Right cardiac atrium (tissue), 5 donors: ENCODE measurements at regions of chr4 and their contacts with region 1.

Region 1: GRCh38 chr4:82428969-82429727 is 1.1 kb downstream of the HNRNPDL start:
- DNase-seq: peak; percentile 92 to 98 (median 97)
- ATAC-seq: peak; percentile 89 to 90
- H3K4me3 ChIP-seq: peak overlapping the region; percentile 64
- H3K27ac ChIP-seq: peak overlapping the region; percentile 95
- H3K4me1 ChIP-seq: peaks cover 3% of the 10 kb centered on the region
- H3K27me3 ChIP-seq: no peaks in the 10 kb centered on the region

Region 2: DNA sequence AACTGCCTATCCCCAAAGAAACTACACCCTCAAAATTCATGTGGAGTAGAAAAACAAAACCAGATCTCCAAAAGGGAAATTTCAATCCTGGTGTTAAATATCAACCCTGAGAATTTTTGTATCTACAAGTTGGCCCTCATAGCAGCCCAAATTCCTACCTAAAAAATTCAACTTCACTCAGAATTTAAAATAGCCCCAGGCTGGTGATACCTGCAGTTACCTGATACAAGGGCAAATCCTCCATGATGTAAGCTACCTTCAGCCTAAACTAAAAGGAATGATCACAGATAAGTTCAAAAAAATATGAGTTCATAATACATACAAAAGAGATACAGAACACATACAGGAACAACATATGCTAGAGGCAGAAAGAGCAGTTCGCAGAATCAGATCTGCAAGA is 193.8 kb before region 1 on chr4:
- intact Hi-C with region 1: no loop called
- DNase-seq: no peak
- ATAC-seq: no peak
- H3K4me3 ChIP-seq: no peak overlapping the region
- H3K27ac ChIP-seq: no peak overlapping the region
- H3K4me1 ChIP-seq: no peaks in the 10 kb centered on the region
- H3K27me3 ChIP-seq: no peaks in the 10 kb centered on the region

Region 3: GRCh38 chr4:82373816-82374625 is 55.1 kb before region 1 on chr4 and contains the start of gene HNRNPD:
- intact Hi-C with region 1: loop called (anchors 2 to 10 kb)
- DNase-seq: peak; percentile 98 to 99 (median 99)
- ATAC-seq: peak; percentile 97 to 98
- H3K4me3 ChIP-seq: peak within 1 kb of the TSS; percentile 88
- H3K27ac ChIP-seq: peak within 1 kb of the TSS; percentile 98
- H3K4me1 ChIP-seq: peaks cover 3% of the 10 kb centered on the region
- H3K27me3 ChIP-seq: no peaks in the 10 kb centered on the region
- total RNA-seq, gene HNRNPD: 128 to 141 (median 135) TPM

Region 4: GRCh38 chr4:82379964-82380733 is 49.0 kb before region 1 on chr4:
- intact Hi-C with region 1: loop called in 3 of 4 experiments (anchors 2 to 10 kb)
- DNase-seq: peak; percentile 59 to 82 (median 80)
- ATAC-seq: peak; percentile 91 to 92
- H3K4me3 ChIP-seq: no peak overlapping the region
- H3K27ac ChIP-seq: no peak overlapping the region
- H3K4me1 ChIP-seq: peaks cover 8% of the 10 kb centered on the region
- H3K27me3 ChIP-seq: no peaks in the 10 kb centered on the region